ENCODE measurements at regions of chr1 and their contacts with region 1.

Region 1: DNA sequence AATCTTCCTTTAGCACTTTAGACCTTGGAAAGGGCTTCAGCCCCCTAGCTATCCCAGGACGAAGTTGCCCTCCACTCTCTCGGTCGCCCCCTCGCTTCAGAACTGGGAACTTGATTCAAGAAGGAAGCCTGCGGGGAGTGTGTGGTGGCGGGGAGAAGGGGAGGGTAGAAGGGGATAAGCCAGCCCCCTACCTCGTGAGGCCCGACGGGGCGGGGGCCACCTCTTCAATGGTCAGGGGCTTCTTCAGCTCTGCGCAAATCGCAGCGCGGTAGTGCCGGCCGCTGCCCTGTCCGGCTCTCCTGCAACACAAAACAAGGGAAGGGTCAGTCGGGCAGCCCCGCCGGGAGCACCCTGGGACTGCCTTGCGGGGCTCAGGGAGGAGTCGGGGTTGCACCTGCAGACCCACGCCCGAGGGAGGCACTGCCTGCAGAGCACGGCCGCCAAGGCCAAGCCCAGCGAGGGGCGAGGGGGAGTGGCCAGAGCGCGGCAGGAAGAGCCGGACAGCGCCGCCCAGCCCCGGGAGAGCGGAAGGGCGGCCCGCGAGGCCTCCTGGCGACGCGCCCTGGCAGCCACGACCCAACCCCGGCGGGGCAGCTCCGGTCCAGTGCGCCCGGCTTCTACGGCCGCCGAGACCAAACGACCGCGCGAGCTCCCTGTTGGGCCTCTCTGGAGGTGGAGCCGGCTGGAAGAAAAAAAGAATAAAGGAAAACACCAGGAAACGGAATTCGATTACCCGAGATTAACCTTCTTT is 56.2 kb upstream of the RASAL2 start:
- DNase-seq: peak; percentile 89 to 95
- ATAC-seq: peak; percentile 95 to 97 (median 97)
- H3K4me3 ChIP-seq: peak overlapping the region; percentile 76
- H3K27ac ChIP-seq: peak overlapping the region; percentile 90
- H3K4me1 ChIP-seq: peaks cover 4% of the 10 kb centered on the region
- H3K27me3 ChIP-seq: no peaks in the 10 kb centered on the region
- CTCF ChIP-seq: no peak

Region 2: DNA sequence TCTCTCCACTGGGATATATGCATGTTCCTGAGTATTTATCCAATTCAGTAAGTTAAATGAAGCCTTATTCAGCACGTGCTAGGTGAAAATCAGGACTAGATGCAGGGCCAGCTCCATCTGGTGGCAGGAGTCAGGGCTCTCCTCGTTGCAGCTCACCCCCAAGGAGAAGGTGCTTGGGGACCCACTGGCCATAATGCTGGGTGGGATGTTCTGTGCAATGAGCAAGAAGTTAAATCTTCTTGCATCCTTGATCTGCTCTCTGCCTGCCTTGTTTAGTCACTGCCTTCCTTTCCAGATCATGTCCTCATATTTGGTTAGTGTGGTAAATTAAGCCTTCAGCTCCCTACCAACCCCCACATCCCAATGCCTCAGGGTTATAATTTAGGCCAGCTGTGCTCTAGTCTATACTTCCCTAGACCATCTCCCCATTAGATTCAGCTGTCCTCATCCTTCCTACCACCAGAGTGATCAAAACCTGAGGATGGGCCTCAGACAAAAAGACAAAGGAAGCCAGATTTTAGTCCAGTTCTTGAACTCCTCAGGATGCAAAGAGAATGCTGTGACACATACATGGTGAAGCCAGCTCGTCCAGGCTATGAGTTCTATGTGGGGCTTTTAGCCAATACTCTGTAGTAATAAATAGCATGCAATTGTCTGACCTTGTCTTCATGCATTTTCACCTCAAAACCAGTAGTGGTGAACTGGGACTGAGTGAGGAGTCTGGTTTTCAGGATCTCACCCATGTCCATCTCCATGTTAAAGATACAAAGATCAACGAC is 123.7 kb before region 1 on chr1:
- intact Hi-C with region 1: no loop called
- DNase-seq: no peak
- ATAC-seq: peak in 1 of 4 donors; percentile 34
- H3K4me3 ChIP-seq: no peak overlapping the region
- H3K27ac ChIP-seq: no peak overlapping the region
- H3K4me1 ChIP-seq: no peaks in the 10 kb centered on the region
- H3K27me3 ChIP-seq: no peaks in the 10 kb centered on the region
- CTCF ChIP-seq: peak; percentile 31

Region 3: GRCh38 chr1:178075333-178075732 is 37.7 kb after region 1 on chr1:
- intact Hi-C with region 1: no loop called
- DNase-seq: no peak
- ATAC-seq: no peak
- H3K4me3 ChIP-seq: no peak overlapping the region
- H3K27ac ChIP-seq: no peak overlapping the region
- H3K4me1 ChIP-seq: no peaks in the 10 kb centered on the region
- H3K27me3 ChIP-seq: no peaks in the 10 kb centered on the region
- CTCF ChIP-seq: no peak

Region 4: DNA sequence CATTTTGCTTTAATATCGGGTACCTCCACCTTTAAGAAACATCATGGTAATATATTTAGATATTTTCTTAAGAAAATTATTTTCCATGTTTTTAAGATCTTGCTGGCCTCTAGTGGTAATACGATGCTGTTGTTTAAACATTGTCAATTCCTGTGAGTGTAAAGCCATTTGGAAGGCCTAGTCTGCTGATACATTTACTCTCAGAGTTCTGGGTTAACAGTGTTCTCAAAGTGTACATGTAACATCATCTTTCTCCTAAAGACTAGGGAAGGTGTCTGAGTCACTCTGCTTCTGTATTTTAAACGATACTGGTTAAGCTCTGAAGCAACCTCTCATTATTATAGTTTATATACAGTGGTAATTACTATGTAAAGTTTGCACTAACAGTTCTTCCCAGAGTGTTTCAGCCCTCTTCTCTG is 245.3 kb after region 1 on chr1:
- intact Hi-C with region 1: loop called in 1 of 2 experiments (anchors 5 kb)
- DNase-seq: no peak
- ATAC-seq: peak in 1 of 4 donors; percentile 37
- H3K4me3 ChIP-seq: no peak overlapping the region
- H3K27ac ChIP-seq: no peak overlapping the region
- H3K4me1 ChIP-seq: no peaks in the 10 kb centered on the region
- H3K27me3 ChIP-seq: no peaks in the 10 kb centered on the region
- CTCF ChIP-seq: peak; percentile 46